PC-3 (cell line): ENCODE measurements at regions of chr2 and their contacts with region 1.

Region 1: GRCh38 chr2:54899576-54900200 is 150.6 kb downstream of the RTN4 start:
- DNase-seq: peak; percentile 92
- ATAC-seq: peak; percentile 59
- H3K4me3 ChIP-seq: peak overlapping the region; percentile 12; the same call in 1 of the 2 replicates
- H3K27ac ChIP-seq: peak overlapping the region; percentile 35
- H3K4me1 ChIP-seq: peaks cover 37% of the 10 kb centered on the region
- H3K27me3 ChIP-seq: no peaks in the 10 kb centered on the region
- CTCF ChIP-seq: peak; percentile 89

Region 2: GRCh38 chr2:54723131-54723995 is 176.3 kb before region 1 on chr2 and contains the start of gene EML6:
- CTCF ChIA-PET with region 1: interaction called, 8 read pairs
- POLR2A ChIA-PET with region 1: no interaction called
- intact Hi-C with region 1: loop called (anchors 1 kb)
- DNase-seq: peak; percentile 99
- ATAC-seq: peak; percentile 95
- H3K4me3 ChIP-seq: peak within 1 kb of the TSS; percentile 83
- H3K27ac ChIP-seq: peak within 1 kb of the TSS; percentile 46
- H3K4me1 ChIP-seq: peaks cover 26% of the 10 kb centered on the region
- H3K27me3 ChIP-seq: no peaks in the 10 kb centered on the region
- CTCF ChIP-seq: peak; percentile 38
- total RNA-seq, gene EML6: 5.3 and 15.7 TPM in 2 replicates

Region 3: DNA sequence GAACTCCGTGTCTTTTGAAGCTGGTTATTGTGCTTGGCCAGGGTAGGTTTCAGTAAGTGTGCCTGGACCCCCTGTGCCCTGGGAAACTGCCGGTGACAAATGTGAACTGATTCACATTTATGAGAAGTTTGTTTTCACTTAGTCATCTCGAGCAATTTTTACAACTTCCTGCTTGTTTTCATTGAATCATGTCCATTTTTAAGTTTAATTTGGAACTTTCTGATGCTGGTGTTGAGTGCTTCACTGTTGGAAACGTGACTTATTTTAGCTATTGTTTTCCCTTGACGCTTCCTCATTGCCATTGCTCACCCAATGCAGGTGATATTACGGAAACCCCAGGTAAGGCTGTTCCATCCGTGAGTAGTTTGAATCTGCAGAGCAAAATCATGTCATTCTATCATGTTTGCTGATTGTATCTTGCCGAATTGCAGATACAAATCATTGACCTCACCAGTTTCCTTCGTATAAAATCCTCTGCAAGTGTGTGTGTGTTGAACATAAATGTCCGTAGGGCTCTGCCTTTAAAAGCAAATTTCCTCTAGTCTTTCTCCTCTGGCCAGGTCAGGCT is 53.4 kb after region 1 on chr2:
- CTCF ChIA-PET with region 1: interaction called, 7 read pairs
- POLR2A ChIA-PET with region 1: no interaction called
- intact Hi-C with region 1: loop called (anchors 1 kb)
- DNase-seq: peak; percentile 91
- ATAC-seq: peak; percentile 80
- H3K4me3 ChIP-seq: peak overlapping the region; percentile 11
- H3K27ac ChIP-seq: peak overlapping the region; percentile 94
- H3K4me1 ChIP-seq: peaks cover 49% of the 10 kb centered on the region
- H3K27me3 ChIP-seq: no peaks in the 10 kb centered on the region
- CTCF ChIP-seq: no peak

Region 4: GRCh38 chr2:55026202-55026601 is 126.5 kb after region 1 on chr2:
- CTCF ChIA-PET with region 1: no interaction called
- POLR2A ChIA-PET with region 1: interaction called, 10 read pairs
- intact Hi-C with region 1: no loop called
- DNase-seq: no peak
- ATAC-seq: no peak
- H3K4me3 ChIP-seq: no peak overlapping the region
- H3K27ac ChIP-seq: no peak overlapping the region
- H3K4me1 ChIP-seq: no peaks in the 10 kb centered on the region
- H3K27me3 ChIP-seq: no peaks in the 10 kb centered on the region
- CTCF ChIP-seq: no peak

Region 5: GRCh38 chr2:55168221-55169154 is 268.8 kb after region 1 on chr2:
- CTCF ChIA-PET with region 1: interaction called, 12 read pairs
- POLR2A ChIA-PET with region 1: interaction called, 3 read pairs
- intact Hi-C with region 1: no loop called
- DNase-seq: peak; percentile 77
- ATAC-seq: peak; percentile 60
- H3K4me3 ChIP-seq: no peak overlapping the region
- H3K27ac ChIP-seq: no peak overlapping the region
- H3K4me1 ChIP-seq: peaks cover 23% of the 10 kb centered on the region
- H3K27me3 ChIP-seq: no peaks in the 10 kb centered on the region
- CTCF ChIP-seq: peak; percentile 92

Region 6: GRCh38 chr2:55419679-55420438 is 520.2 kb after region 1 on chr2 and contains the start of gene CCDC88A:
- CTCF ChIA-PET with region 1: no interaction called
- POLR2A ChIA-PET with region 1: no interaction called
- intact Hi-C with region 1: loop called (anchors 10 kb)
- DNase-seq: peak; percentile 94
- ATAC-seq: peak; percentile 91
- H3K4me3 ChIP-seq: peak within 1 kb of the TSS; percentile 82
- H3K27ac ChIP-seq: no peak within 1 kb of the TSS
- H3K4me1 ChIP-seq: peaks cover 23% of the 10 kb centered on the region
- H3K27me3 ChIP-seq: no peaks in the 10 kb centered on the region
- CTCF ChIP-seq: 0 out of 2 replicates have a peak, but pooled peaks have one; percentile 16
- total RNA-seq, gene CCDC88A: 21.6 and 28.7 TPM in 2 replicates